Posterior cingulate gyrus (tissue), 11 donors: ENCODE measurements at regions of chr15 and their contacts with region 1.

Region 1: DNA sequence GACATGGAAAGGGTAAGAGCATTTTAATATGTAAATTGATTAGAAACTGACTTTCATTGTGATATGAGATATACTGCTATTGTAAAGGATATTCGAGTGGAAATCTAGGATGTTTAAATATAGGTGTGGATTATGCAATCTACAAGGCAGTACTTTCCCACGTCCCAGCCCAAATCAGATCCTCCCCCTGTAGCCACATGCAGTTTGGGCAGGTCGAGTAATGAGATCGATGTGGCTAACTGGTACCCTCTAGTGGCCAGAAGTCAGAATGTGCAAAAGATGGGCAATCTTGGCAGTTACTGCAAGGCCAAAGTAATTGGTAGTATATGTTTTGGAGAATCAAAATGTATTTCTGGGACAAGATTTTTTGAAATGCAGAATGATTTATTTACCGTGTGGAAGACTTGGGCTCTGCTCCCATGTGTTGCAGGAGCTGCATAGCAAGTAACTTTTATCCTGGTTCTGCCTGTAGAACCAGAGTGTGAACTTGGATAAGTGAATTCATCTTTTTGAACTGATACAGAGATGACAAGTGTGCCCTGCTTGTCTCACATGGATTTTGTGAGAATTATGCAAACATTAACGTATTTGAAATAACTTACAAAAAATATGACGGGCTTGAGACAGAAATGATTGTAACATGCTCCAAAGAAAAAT is 94.5 kb upstream of the ADAMTSL3 start:
- DNase-seq: peak in 9 of 10 donors; percentile 41 to 92 (median 75)

Region 2: DNA sequence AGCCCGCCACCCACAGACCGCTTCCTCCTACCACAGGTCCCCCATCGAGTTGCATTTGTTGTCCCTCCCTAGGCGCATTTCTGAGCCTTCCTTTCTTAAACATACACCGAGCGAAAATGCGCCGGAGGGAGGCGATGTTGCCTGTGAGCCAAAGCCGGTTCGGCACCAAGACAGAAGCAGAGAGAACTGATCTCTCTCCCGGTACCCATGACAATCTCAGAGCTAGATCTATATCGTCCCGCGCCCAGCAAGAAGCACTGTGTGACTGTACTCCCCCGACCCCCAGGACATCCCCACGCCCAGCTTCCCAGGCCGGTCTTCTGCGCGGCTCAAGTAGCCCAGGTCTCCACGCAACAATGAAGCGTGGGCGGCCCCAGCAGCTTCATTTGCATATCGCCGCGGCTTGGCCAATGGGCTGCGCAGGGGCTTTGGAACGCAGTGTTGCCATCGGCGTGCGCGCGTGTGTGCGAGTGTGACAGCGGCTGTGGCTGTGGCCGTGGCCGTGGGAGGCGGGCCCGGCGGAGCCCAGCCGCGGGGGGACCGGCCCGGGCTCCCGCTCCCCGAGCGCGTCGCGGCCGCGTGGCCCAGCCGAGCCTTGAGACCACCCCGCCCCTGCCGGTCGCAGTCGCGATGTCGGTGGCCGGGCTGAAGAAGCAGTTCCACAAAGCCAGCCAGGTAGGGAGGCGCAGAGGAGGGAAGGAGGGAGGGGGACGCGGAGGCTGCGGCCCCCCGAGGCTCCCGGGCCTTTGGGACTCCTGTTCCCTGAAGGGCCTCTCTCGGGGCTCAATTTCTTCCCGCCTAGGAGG is 112.3 kb before region 1 on chr15 and contains the start of gene SH3GL3:
- intact Hi-C with region 1: loop called (anchors 1 kb)
- DNase-seq: peak; percentile 88 to 99 (median 92)

Region 3: DNA sequence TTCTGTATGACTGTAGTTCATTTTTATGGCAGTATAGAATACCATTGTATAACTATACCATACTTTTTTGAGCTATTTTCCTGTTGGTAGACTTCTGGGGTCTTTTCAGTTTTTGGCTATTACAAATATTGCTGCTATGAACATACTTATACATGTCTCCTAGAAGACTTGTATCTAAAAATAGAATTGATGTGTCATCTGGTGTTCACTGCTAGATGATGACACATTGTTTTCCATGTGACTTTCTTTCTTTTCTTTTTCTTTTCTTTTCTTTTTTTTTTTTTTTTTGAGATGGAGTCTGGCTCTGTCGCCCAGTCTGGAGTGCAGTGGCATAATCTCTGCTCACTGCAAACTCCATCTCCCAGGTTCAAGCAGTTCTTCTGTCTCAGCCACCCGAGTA is 42.5 kb before region 1 on chr15:
- intact Hi-C with region 1: loop called (anchors 5 kb)
- DNase-seq: no peak

Region 4: DNA sequence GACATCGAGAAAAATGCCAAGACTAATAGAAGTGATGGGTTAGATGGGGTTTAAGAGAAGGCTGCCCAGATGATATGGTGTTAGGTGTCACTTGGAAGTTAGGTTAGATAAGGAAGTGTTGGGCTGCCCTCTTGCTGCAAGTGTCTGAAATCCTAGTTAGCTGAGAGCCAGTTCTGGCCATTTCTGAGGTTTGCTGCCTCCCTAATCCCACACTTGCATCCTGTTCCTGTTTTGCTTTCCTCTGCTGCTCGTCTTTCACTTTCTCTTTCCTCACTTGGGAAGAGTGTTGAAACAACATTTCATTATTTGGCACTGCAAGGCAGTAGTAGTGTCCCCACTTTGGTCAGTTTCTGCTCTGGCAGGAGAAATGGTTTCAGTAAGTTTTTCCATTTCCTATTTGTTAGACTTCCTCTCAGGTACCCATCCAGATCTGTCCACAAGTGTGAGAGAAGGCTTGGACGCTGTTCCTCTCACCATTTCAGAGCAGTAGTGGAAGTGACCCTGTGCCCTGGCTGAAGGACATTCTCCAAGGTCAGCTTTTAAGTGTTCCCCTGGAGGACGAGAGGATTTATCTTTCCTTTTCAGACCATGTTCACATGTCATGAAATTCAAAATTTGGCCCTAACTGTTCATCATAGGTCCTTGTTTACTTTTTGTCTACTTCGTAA is 187.7 kb after region 1 on chr15:
- intact Hi-C with region 1: loop called (anchors 10 kb)
- DNase-seq: no peak

Region 5: DNA sequence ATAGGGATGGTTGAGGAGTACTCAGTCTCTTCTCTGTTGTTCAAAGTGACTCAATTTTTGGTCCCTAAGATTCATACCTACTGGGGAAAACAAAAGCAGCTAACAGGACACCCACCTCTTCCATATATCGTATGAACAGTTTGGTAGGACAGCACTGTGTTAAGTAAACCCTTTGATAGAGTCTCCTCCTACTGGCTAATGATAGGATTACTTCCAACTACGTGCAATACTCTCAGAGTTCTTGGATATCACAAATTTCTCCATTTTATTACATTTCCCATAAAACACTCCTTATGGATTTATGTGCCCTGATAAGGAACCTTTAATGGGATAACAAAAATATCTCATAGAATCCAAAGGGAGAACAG is 475.9 kb after region 1 on chr15:
- intact Hi-C with region 1: loop called (anchors 10 kb)
- DNase-seq: no peak